Activated CD4-positive, alpha-beta memory T cell treated with anti-CD3 and anti-CD28 coated beads for 36 hours (primary cell): ENCODE measurements at regions of chr1 and their contacts with region 1.

Region 1: DNA sequence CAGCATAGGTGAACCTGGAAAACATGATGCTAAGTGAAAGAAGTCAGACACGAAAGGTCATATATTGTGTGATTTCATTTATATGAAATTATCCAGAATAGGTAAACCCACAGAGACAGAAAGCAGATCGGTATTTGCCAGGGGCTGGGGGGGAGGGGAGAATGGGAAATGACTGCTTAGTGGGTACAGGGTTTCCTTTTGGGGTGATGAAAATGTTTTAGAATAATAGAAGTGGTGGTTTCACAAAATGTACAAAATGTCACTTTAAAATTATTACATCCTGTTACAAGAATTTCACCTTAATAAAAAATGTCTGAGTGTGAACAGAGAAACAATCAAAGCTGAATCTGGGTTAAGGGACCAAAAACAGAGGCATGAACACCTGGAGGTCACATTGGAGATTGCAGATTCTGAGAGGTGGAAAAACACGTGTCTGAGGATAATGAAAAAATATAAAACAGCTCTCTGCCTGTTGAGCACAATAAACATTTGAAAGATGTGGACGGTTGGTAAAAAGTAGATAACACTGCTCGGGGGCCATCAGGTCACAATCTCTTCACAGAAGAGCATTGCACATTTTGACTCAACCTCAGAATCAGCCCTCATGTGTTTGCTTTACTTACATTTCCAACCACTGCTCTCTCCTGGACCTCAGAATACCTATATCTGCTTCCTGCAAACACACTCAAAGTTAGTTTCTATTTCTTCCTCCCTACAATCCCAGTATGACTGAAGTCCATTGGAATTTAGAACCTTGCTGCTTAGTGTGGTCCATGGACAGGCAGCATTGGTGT is 3.2 kb downstream of the SLAMF6 start:
- DNase-seq: peak; percentile 66
- H3K4me3 Mint-ChIP-seq: peak overlapping the region; percentile 92
- H3K27ac Mint-ChIP-seq: peak overlapping the region; percentile 92
- H3K4me1 Mint-ChIP-seq: peaks cover 83% of the 10 kb centered on the region
- H3K27me3 Mint-ChIP-seq: no peaks in the 10 kb centered on the region

Region 2: GRCh38 chr1:160108888-160109662 is 410.8 kb before region 1 on chr1:
- CTCF ChIA-PET with region 1: no interaction called
- POLR2A ChIA-PET with region 1: no interaction called
- intact Hi-C with region 1: no loop called
- DNase-seq: peak; percentile 47
- H3K4me3 Mint-ChIP-seq: no peak overlapping the region
- H3K27ac Mint-ChIP-seq: no peak overlapping the region
- H3K4me1 Mint-ChIP-seq: no peaks in the 10 kb centered on the region
- H3K27me3 Mint-ChIP-seq: peaks cover 3% of the 10 kb centered on the region

Region 3: DNA sequence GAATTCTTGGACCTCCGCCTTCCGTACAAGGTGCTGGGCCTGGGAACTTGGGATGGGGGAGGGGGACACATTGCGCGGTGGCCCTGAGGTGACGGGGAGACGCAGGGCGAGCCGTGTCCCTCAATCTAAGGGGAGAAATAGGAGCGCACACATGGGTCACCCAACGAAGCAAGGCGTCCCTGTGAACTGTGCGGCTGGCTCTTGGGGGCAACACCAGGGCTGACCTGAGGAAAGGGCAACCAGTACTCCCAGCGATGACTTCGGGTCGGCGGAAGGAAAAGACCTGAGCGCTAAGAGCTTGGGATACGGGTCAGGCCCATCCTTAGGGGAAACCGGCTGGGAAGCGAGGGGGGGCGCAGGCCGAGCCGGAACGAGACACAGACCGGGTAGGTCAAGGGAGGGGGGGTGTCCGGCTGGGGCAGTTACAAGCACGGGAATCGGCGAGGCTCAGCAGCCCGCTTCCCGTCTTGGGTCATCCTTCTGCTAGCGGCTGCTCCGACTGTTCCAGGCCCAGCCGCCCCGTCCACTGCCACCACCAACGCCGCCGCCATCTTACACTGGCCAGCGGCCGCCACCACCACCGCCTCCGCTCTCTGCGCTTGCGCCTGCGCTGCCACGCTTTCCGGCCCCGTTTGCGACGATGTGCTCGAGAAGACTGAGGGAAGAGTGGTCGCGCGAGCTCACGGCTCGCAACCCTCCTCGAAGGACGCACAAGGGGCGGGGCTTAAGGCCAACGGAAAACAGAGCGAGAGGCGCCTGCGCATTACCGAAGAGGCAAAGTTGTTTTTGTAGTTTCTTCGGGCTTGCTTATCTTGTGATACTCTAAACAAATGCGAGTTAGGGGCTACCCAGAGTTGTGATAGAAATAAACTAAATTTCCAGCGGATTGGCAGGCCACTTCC is 257.7 kb before region 1 on chr1 and contains the start of gene DCAF8:
- CTCF ChIA-PET with region 1: no interaction called
- POLR2A ChIA-PET with region 1: no interaction called
- intact Hi-C with region 1: loop called (anchors 2 kb)
- DNase-seq: peak; percentile 99
- H3K4me3 Mint-ChIP-seq: peak within 1 kb of the TSS; percentile 96
- H3K27ac Mint-ChIP-seq: peak within 1 kb of the TSS; percentile 99
- H3K4me1 Mint-ChIP-seq: peaks cover 45% of the 10 kb centered on the region
- H3K27me3 Mint-ChIP-seq: no peaks in the 10 kb centered on the region
- total RNA-seq, gene DCAF8: 142 to 150 TPM

Region 4: GRCh38 chr1:160451119-160451858 is 68.5 kb before region 1 on chr1:
- CTCF ChIA-PET with region 1: interaction called, 4 read pairs
- POLR2A ChIA-PET with region 1: interaction called, 5 read pairs
- intact Hi-C with region 1: loop called (anchors 1 kb)
- DNase-seq: peak; percentile 45
- H3K4me3 Mint-ChIP-seq: peak overlapping the region; percentile 53
- H3K27ac Mint-ChIP-seq: peak overlapping the region; percentile 97
- H3K4me1 Mint-ChIP-seq: peaks cover 79% of the 10 kb centered on the region
- H3K27me3 Mint-ChIP-seq: no peaks in the 10 kb centered on the region

Region 5: DNA sequence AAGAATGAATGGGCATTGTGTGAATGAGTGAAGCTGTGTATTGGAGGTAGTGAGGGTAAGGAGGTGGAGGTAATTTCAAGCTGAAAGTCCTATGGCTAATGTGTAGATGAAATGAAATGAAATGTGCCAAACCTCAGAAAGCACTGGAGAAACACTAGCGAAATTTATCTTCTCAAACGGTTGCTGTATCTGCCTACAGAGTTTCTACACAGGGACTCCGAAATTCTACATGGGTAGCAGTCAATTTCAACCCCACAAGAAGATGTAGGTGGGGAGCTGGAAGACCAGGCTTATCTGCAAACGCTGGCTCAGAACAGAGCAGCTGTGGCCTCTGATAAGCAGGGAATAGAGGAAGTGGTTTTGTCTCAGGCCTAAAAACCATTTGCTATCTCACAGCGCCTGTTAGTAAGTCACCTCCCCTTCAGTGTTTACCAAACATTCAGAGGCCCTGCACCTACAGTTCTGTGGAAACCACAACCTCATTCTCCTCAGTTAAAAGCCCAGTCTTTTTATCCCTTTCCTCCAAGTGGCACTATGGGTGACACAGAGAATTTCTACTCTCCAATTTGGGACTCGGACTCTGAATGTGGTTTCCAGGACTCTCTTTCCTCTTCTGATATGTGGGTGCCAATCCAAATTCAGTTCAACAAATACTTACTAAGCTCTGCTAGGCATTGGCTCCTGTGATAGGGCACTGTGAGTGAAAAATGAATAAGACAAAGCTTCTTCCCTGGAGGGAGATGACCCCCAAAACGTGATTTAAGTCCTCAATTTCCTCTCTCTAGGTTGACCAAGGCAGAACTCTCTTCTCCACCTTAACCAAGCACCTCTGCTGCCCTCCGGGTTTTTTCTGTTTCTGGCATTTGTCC is 20.4 kb after region 1 on chr1:
- CTCF ChIA-PET with region 1: interaction called, 11 read pairs
- POLR2A ChIA-PET with region 1: interaction called, 9 read pairs
- intact Hi-C with region 1: loop called (anchors 1 kb)
- DNase-seq: peak; percentile 71
- H3K4me3 Mint-ChIP-seq: peak overlapping the region; percentile 46
- H3K27ac Mint-ChIP-seq: peak overlapping the region; percentile 95
- H3K4me1 Mint-ChIP-seq: peaks cover 59% of the 10 kb centered on the region
- H3K27me3 Mint-ChIP-seq: no peaks in the 10 kb centered on the region

Region 6: DNA sequence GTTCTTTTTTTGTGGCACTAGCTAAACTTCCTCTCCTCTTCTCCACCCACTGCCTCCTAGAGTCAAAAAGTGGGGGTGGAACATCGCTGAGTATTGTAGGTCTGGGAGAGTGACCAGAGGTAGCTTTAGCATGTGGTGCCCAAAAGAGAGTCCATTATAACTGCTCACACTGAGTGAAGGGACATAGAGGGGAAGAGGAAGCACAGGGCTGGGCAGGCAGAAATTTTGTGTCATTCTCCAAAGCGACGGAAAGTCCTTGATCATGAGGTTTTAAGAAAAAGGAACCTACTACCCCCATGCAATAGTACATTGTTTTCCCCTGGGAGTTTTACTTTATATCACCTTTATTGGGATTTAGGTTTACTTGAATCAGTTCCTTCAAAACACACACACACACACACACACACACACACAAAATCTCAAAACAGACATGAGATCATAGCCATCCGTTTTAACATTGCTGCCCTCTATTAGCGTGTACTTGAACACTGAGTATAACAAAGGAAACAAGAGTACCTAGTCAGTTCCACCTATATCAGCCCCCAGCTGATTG is 55.3 kb after region 1 on chr1:
- CTCF ChIA-PET with region 1: no interaction called
- POLR2A ChIA-PET with region 1: no interaction called
- intact Hi-C with region 1: loop called (anchors 2 kb)
- DNase-seq: no peak
- H3K4me3 Mint-ChIP-seq: peak overlapping the region; percentile 63
- H3K27ac Mint-ChIP-seq: peak overlapping the region; percentile 96
- H3K4me1 Mint-ChIP-seq: peaks cover 82% of the 10 kb centered on the region
- H3K27me3 Mint-ChIP-seq: no peaks in the 10 kb centered on the region